PC-9 (cell line): ENCODE measurements at regions of chr18 and their contacts with region 1.

Region 1: GRCh38 chr18:45828917-45829811 is 3.7 kb downstream of the SIGLEC15 start:
- DNase-seq: peak; percentile 74 to 95
- H3K4me3 ChIP-seq: peak overlapping the region; percentile 30; the same call in 1 of the 2 replicates
- H3K27ac ChIP-seq: peak overlapping the region; percentile 82
- H3K4me1 ChIP-seq: peaks cover 56% of the 10 kb centered on the region
- H3K27me3 ChIP-seq: no peaks in the 10 kb centered on the region
- CTCF ChIP-seq: no peak

Region 2: GRCh38 chr18:45441110-45441842 is 387.9 kb before region 1 on chr18:
- CTCF ChIA-PET with region 1: no interaction called
- POLR2A ChIA-PET with region 1: no interaction called
- intact Hi-C with region 1: no loop called
- DNase-seq: no peak
- H3K4me3 ChIP-seq: no peak overlapping the region
- H3K27ac ChIP-seq: no peak overlapping the region
- H3K4me1 ChIP-seq: no peaks in the 10 kb centered on the region
- H3K27me3 ChIP-seq: no peaks in the 10 kb centered on the region
- CTCF ChIP-seq: peak; percentile 81

Region 3: DNA sequence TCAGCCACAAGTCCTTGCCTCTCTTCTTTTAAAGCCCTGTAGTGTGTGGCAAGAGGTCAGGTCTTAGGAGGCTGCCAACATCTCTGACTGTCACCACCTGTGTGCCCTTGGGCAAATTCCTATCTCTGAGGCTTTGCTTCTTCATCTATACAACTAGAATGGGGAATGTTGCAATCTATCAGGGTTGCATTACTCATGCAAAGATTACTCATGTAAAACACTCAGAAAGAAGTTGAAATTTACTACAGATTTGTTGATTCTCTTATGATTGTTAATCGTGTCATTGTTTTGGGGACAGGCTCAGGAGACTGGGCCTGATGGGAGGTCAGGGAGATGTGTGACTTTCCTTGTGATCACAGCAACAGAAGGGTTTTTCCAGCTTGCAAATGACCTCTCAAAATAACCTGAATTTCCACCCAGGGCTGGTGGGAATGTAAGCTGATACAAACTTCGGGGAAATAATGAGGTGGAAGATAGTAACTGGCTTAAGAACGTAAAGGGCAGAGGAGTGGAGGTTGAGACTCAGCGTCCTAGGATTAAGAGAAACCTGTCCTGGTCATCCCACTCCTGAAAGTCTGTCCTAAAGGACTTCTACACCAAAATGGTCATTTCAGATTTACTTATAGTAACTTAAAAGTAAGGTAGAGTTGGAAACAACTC is 35.7 kb before region 1 on chr18:
- CTCF ChIA-PET with region 1: no interaction called
- POLR2A ChIA-PET with region 1: no interaction called
- intact Hi-C with region 1: loop called (anchors 1 kb)
- DNase-seq: peak; percentile 78 to 100
- H3K4me3 ChIP-seq: no peak overlapping the region; the same call in 1 of the 2 replicates
- H3K27ac ChIP-seq: peak overlapping the region; percentile 97
- H3K4me1 ChIP-seq: peaks cover 49% of the 10 kb centered on the region
- H3K27me3 ChIP-seq: no peaks in the 10 kb centered on the region
- CTCF ChIP-seq: no peak

Region 4: DNA sequence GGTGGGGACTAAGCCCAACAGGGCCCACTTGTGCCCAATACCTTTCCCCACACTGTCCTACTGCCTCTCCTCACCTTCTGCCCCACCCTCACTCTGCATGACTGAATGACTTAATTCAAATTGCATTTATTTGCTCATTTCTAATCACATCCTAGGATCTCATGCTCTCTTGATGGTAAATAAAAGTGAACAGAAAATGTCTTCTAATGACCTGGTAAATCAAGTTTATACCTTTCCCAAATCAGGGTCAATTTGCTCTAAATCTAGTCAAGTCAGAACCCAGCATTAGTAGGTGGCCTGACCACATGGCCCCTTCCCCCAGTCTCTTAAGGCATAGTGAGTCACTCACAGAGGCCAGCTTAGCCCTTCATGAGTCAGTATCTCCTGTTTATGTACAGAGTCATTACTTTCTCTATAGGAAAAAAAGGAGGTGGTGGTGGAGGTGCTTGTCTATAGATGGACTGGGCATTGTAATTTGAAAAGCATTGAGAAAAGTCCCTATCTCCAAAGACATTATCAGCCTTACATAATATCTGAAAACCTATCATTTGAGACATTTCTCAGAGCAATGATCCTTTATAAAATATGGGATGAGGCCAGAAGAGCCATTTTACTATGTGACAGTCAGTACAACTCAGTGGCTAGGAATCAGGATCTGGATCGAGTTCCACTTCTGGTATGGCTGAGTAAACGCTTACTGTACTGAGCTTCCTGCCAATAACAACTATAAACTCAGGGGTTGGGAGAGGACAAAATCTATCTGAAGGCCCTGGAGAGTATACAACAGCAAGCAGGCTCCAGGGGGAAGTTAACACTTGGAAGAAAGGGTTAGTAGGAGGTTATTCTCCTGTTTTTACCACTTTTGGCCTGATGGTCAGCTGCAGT is 26.3 kb before region 1 on chr18:
- CTCF ChIA-PET with region 1: no interaction called
- POLR2A ChIA-PET with region 1: interaction called, 6 read pairs
- intact Hi-C with region 1: loop called (anchors 1 kb)
- DNase-seq: peak; percentile 68 to 100
- H3K4me3 ChIP-seq: peak overlapping the region; percentile 23; the same call in 1 of the 2 replicates
- H3K27ac ChIP-seq: peak overlapping the region; percentile 98
- H3K4me1 ChIP-seq: peaks cover 73% of the 10 kb centered on the region
- H3K27me3 ChIP-seq: no peaks in the 10 kb centered on the region
- CTCF ChIP-seq: no peak